ENCODE measurements at regions of chr7 and their contacts with region 1.

Region 1: DNA sequence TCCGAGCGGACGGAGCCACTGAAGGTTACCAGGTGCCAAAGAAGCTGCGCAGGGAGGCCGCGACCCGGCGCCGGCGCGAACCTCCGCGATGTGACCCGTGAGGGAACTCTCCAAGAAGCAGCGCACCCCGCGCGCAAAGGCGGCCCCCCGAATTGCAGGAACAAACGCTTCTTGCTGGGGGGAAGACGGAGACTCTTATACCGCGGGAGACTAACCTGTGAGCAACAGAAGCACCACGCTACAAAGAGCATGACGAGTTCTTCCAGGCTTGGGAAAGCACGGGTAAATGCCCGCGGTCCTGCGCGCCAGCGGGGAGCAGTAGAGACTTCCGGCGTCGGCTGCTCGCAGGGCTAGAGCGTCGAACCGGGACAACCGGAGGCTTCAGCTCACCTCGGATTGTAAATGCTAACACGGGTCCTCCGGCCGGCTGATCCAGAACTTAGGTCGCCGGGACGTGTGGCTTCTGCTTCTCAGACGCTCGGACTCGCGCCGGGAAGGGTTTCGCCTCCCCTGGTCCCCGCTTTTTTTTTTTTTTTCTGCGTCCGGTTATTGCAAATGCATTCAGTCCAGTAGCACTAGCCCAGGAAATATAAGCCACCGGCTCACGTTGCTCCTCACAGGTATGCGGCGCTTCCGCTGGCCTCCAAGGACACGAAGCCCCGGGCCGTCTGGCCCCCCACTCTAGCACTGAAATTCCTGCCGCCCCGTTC is at the start of gene COA1:
- DNase-seq: peak; percentile 61 to 91 (median 75)
- ATAC-seq: peak; percentile 94 to 97 (median 96)
- H3K4me3 ChIP-seq: peak within 1 kb of the TSS; percentile 91 to 96
- H3K4me3 Mint-ChIP-seq: peak within 1 kb of the TSS; percentile 90 to 93 (median 91)
- H3K27ac ChIP-seq: peak within 1 kb of the TSS; percentile 58
- H3K27ac Mint-ChIP-seq: peak within 1 kb of the TSS; percentile 86 to 90
- H3K4me1 ChIP-seq: peaks cover 5 to 13% of the 10 kb centered on the region in 2 experiments
- H3K4me1 Mint-ChIP-seq: peaks cover 36 to 45% (median 37%) of the 10 kb centered on the region in 3 donors
- H3K27me3 ChIP-seq: no peaks in the 10 kb centered on the region
- H3K27me3 Mint-ChIP-seq: peaks cover 0 to 2% of the 10 kb centered on the region in 2 donors
- total RNA-seq, gene COA1: 49.6 to 92.1 (median 67.8) TPM

Region 2: GRCh38 chr7:43834463-43835251 is 105.3 kb after region 1 on chr7:
- CTCF ChIA-PET with region 1: interaction called, 3 to 14 read pairs
- POLR2A ChIA-PET with region 1: no interaction called
- DNase-seq: peak in 21 of 35 experiments; percentile 2 to 76 (median 10)
- ATAC-seq: peak; percentile 36 to 54 (median 50)
- H3K4me3 ChIP-seq: peak overlapping the region; percentile 25 to 66
- H3K4me3 Mint-ChIP-seq: peak overlapping the region; percentile 71 to 88 (median 83)
- H3K27ac ChIP-seq: peak overlapping the region; percentile 87
- H3K27ac Mint-ChIP-seq: peak overlapping the region; percentile 93 to 96
- H3K4me1 ChIP-seq: peaks cover 3 to 20% of the 10 kb centered on the region in 2 experiments
- H3K4me1 Mint-ChIP-seq: peaks cover 19 to 24% (median 22%) of the 10 kb centered on the region in 3 donors
- H3K27me3 ChIP-seq: peaks cover 0 to 4% of the 10 kb centered on the region in 2 experiments
- H3K27me3 Mint-ChIP-seq: peaks cover under 1 to 4% of the 10 kb centered on the region in 2 donors

Region 3: DNA sequence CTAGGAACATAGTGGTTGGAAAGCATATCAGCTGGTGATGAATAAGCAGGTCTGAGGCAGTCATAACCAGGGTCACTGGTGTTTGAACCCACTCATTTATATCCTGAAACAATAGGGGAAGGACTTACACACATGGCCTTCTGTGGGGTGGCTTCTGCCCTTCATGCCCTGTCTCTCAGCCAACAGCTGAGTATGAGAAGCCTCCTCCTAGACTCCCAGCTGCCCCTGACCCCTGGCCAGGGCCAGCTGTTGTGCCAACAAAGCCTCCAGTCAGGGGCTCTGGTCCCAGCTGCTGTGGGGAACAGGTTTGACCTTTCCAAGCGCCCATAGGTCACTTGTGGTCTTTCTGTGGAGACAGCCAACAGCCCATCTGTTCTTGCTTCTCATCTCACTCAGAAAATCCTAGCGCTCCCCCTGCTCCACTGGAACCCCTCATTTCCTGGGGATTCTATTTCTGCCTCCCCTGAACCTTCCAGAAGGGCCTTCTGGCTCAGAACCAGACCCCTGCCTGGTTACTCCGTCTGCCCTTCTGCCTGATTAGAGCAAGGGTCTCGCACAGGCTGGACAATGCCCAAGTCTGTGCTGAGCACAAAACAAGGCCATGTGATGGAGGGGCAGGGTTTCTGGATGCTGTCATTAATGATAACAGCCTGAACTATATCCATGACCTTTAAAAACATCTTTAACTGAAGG is 1165.7 kb after region 1 on chr7:
- CTCF ChIA-PET with region 1: no interaction called
- POLR2A ChIA-PET with region 1: no interaction called
- DNase-seq: no peak
- ATAC-seq: no peak
- H3K4me3 ChIP-seq: no peak overlapping the region
- H3K4me3 Mint-ChIP-seq: no peak overlapping the region
- H3K27ac ChIP-seq: no peak overlapping the region
- H3K27ac Mint-ChIP-seq: peak overlapping the region in 1 of 2 donors; percentile 15
- H3K4me1 ChIP-seq: peaks cover 21 to 24% of the 10 kb centered on the region in 2 experiments
- H3K4me1 Mint-ChIP-seq: peaks cover 30 to 35% (median 32%) of the 10 kb centered on the region in 3 donors
- H3K27me3 ChIP-seq: no peaks in the 10 kb centered on the region
- H3K27me3 Mint-ChIP-seq: no peaks in the 10 kb centered on the region